ENCODE measurements at regions of chr13 and their contacts with region 1.

Region 1: DNA sequence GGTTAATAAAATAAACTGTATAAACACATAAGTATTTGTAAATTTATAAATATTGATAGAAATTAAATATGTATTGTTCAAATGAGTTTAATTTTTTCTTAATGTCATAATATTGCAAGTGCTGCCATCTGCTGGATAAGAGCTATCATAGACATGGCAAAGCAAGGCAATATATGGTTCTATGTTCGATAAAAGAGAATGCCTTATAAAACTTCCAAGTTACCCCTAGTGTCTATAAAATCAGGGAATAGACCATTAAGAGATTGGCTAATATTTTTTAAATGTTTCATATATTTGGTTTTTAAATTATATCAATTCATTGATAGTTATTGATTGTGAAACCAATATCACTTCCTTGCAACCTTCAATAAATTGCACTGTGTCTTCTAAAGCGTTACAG is 28.9 kb upstream of the SLITRK6 start:
- DNase-seq: no peak
- H3K4me3 ChIP-seq: no peak overlapping the region
- H3K27ac ChIP-seq: no peak overlapping the region
- H3K4me1 ChIP-seq: no peaks in the 10 kb centered on the region
- H3K27me3 ChIP-seq: no peaks in the 10 kb centered on the region
- CTCF ChIP-seq: peak; percentile 65 to 67

Region 2: DNA sequence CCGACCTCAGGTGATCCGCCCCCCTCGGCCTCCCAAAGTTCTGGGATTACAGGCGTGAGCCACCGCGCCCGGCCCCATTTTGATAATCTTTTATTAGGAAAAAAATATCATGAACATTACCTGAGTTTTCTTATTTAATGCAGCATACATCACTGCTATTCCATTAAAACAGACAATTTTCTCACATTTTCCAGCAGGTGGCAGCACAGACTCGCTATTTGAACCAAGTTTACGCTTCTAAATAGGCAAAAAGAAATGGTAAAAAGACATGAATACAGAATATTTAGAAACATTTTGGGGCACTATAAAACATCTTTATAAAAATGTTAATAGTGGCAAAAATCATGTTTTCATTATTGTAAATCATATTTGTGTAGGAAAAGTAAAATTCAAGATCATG is 932.0 kb before region 1 on chr13:
- CTCF ChIA-PET with region 1: no interaction called
- dilution Hi-C with region 1: loop called (anchors 25 kb)
- in situ Hi-C with region 1: no loop called
- intact Hi-C with region 1: loop called (anchors 1 kb)
- DNase-seq: peak; percentile 42
- H3K4me3 ChIP-seq: no peak overlapping the region
- H3K27ac ChIP-seq: no peak overlapping the region
- H3K4me1 ChIP-seq: no peaks in the 10 kb centered on the region
- H3K27me3 ChIP-seq: no peaks in the 10 kb centered on the region
- CTCF ChIP-seq: peak; percentile 58 to 60

Region 3: DNA sequence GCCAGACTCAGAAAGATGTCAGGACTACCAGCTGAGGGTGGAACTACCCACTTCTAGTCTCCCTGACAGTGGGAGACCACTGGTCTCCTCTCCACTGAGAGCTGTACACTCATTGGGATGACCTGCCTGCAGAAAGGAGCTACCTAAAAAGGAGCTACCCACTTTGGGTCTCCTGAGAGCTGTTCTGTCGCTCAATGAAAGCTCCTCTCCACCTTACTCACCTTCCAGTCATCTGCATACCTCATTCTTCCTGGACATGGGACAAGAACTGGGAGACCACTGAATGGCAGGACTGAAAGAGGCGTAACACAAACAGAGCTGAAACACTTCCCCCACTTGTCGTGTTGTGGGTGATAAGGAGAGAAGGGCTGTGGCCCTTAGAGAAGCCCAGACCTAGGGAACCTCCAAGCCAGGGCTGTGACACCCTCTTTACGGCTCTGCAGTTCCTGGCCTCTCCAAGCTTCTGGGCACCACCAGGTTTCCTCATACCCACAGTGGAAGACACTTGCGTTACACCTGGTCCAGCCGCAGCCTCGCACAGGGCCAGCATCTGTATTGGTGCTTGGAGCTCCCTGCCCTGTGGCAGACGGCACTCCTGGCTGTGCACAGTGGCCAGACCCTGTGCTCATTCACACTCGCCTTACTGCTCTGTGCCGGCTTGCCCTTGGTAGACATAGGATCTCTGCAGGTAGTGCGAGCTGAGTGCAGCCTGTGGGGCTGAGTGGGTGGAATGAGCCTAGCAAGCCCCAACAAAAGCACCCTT is 25.9 kb after region 1 on chr13:
- CTCF ChIA-PET with region 1: no interaction called
- dilution Hi-C with region 1: no loop called
- in situ Hi-C with region 1: no loop called
- intact Hi-C with region 1: no loop called
- DNase-seq: no peak
- H3K4me3 ChIP-seq: no peak overlapping the region
- H3K27ac ChIP-seq: no peak overlapping the region
- H3K4me1 ChIP-seq: no peaks in the 10 kb centered on the region
- H3K27me3 ChIP-seq: no peaks in the 10 kb centered on the region
- CTCF ChIP-seq: no peak

Measured in mammary epithelial cell (primary cell).